Natural killer cell (primary cell): ENCODE measurements at regions of chr2 and their contacts with region 1.

Region 1: DNA sequence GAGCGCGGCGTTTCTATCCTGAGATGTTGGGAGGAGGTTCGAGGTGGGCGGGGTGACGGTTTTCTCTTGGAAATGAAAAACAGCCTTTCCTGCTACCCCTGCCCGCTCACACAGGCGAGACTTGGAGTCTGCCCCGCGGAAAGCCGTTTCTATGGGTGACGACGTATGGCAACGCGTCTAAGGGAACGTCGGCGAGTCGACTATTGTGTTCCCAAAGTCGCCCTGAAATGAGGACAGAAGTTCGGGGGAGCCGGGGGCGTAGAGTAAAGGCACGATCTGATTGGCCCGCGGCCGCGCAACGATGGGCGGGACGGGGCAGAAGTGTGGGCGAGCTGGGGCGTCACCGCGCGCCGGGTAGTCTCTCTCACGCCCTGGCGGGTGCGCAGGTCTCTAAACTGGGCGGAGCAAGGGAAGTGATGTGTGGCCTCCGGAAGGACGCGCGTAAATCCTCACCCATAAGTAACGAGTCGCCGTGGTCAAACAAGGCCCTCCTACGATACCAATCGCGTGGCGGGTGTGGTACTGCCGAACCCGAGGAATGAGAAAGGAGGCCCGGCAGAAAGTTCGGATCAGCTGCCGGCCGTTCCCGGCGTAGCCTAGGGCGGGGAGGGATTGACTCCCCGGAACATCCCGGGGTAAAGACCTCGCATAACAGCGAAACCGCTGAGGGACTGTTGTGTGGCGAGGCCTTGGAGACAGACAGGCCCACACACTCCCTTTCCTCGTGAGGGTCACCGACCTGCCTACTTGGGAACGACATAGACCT is 89.6 kb downstream of the FAM161A start:
- DNase-seq: peak; percentile 94 to 98
- ATAC-seq: peak; percentile 96 to 100 (median 96)
- H3K4me3 ChIP-seq: peak overlapping the region; percentile 95
- H3K4me3 Mint-ChIP-seq: peak overlapping the region; percentile 92
- H3K27ac ChIP-seq: peak overlapping the region; percentile 100
- H3K27ac Mint-ChIP-seq: peak overlapping the region; percentile 89 to 96
- H3K4me1 ChIP-seq: peaks cover 11% of the 10 kb centered on the region
- H3K4me1 Mint-ChIP-seq: peaks cover 12 to 13% of the 10 kb centered on the region in 2 donors
- H3K27me3 ChIP-seq: no peaks in the 10 kb centered on the region
- H3K27me3 Mint-ChIP-seq: peaks cover 3 to 4% of the 10 kb centered on the region in 2 donors
- CTCF ChIP-seq: no peak

Region 2: GRCh38 chr2:61694312-61695274 is 69.6 kb before region 1 on chr2:
- intact Hi-C with region 1: loop called (anchors 1 kb)
- DNase-seq: peak; percentile 83 to 90
- ATAC-seq: peak; percentile 97 to 100 (median 97)
- H3K4me3 ChIP-seq: peak overlapping the region; percentile 88
- H3K4me3 Mint-ChIP-seq: peak overlapping the region; percentile 89
- H3K27ac ChIP-seq: peak overlapping the region; percentile 84
- H3K27ac Mint-ChIP-seq: peak overlapping the region; percentile 89 to 93
- H3K4me1 ChIP-seq: peaks cover 17% of the 10 kb centered on the region
- H3K4me1 Mint-ChIP-seq: peaks cover 10 to 19% of the 10 kb centered on the region in 2 donors
- H3K27me3 ChIP-seq: no peaks in the 10 kb centered on the region
- H3K27me3 Mint-ChIP-seq: no peaks in the 10 kb centered on the region
- CTCF ChIP-seq: peak; percentile 45

Region 3: DNA sequence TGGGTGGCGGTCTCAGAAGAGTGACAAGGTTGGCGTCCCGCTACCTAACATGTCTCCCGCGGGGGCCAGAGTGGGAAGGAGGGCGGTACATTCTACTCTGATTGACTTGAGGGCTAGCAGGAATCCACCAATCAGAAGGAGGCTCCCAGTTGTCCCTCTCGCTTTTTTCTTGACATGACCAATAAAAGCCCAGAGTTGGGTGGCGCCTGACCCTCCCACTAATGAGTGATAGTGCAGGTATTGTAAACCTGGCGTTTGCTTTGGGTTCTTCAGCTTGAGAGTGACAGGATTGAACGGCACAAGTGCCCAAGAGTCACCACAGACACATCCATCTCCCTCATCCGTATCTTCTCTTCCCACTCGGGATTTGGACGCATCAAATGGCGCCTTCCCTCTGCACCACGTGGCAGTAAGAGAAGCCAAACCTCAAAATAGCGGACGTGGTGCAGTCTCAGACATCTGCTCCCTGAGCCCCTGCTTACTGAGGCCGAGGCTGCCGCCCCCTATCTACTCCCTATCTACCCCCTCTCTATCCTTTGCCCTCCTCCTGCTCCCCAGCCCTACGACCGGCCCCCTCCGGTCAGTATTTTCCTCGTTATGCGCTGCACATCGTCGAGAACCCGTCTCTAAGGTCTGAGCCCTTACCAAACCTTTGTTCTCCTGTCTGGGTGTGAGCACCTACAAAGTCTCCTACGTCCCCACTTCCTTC is 90.4 kb after region 1 on chr2:
- intact Hi-C with region 1: loop called (anchors 1 kb)
- DNase-seq: peak; percentile 71 to 97
- ATAC-seq: peak; percentile 87 to 94 (median 89)
- H3K4me3 ChIP-seq: peak overlapping the region; percentile 80
- H3K4me3 Mint-ChIP-seq: peak overlapping the region; percentile 99
- H3K27ac ChIP-seq: peak overlapping the region; percentile 64
- H3K27ac Mint-ChIP-seq: peak overlapping the region; percentile 88 to 89
- H3K4me1 ChIP-seq: peaks cover 17% of the 10 kb centered on the region
- H3K4me1 Mint-ChIP-seq: peaks cover 18 to 25% of the 10 kb centered on the region in 2 donors
- H3K27me3 ChIP-seq: no peaks in the 10 kb centered on the region
- H3K27me3 Mint-ChIP-seq: no peaks in the 10 kb centered on the region
- CTCF ChIP-seq: no peak

Region 4: DNA sequence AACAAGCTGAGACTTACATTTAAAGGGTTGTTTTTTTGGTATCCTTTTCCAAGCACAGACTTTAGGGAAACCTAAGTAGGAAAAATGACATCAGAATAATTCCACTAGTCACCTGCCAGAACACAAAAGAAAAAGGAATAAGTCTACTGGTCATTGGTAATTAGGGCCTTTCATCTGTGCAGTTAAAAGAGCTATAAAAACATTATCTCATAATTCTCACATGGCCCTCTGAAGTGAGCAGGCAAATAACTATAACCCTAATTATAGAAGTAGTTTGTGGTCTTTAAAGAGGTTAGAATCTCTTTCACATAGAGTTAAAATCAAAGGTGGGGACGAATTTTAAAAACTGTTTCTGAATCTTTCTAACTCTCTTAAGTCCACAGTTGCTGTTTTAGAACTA is 320.6 kb after region 1 on chr2:
- intact Hi-C with region 1: no loop called
- DNase-seq: no peak
- ATAC-seq: no peak
- H3K4me3 ChIP-seq: no peak overlapping the region
- H3K4me3 Mint-ChIP-seq: no peak overlapping the region
- H3K27ac ChIP-seq: no peak overlapping the region
- H3K27ac Mint-ChIP-seq: no peak overlapping the region
- H3K4me1 ChIP-seq: no peaks in the 10 kb centered on the region
- H3K4me1 Mint-ChIP-seq: no peaks in the 10 kb centered on the region
- H3K27me3 ChIP-seq: no peaks in the 10 kb centered on the region
- H3K27me3 Mint-ChIP-seq: no peaks in the 10 kb centered on the region
- CTCF ChIP-seq: no peak